Cardiac septum (tissue), 1 donor: ENCODE measurements at regions of chr4 and their contacts with region 1.

Region 1: GRCh38 chr4:20464381-20464780 is 212.7 kb downstream of the SLIT2 start:
- DNase-seq: no peak

Region 2: GRCh38 chr4:20445933-20446723 is 18.3 kb before region 1 on chr4:
- intact Hi-C with region 1: loop called (anchors 1 kb)
- DNase-seq: no peak

Region 3: DNA sequence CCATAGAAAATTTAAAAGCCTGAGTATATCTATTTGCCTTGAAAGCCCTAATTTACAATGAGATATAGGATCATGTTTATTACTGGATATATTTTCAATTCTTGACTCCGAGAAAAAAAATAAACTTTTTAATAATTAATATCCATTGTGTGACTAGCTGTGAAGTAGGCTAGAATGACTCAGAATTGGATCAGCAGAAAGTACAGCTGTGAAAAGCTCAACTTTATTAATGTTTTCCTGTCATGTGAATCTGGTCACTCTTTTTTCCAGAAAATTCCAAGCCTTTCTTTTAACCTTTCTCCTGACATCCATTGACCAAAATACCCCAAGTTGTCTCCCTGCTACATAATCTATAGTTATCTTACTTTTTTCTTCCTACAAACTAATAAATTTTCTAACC is 64.1 kb after region 1 on chr4:
- intact Hi-C with region 1: no loop called
- DNase-seq: no peak